ENCODE measurements at regions of chr7 and their contacts with region 1.

Region 1: GRCh38 chr7:83410989-83411591 is 237.8 kb downstream of the SEMA3E start:
- DNase-seq: peak in 1 of 6 donors; percentile 32
- ATAC-seq: peak in 3 of 4 donors; percentile 63 to 68 (median 65)
- H3K4me3 ChIP-seq: no peak overlapping the region
- H3K27ac ChIP-seq: no peak overlapping the region
- H3K4me1 ChIP-seq: no peaks in the 10 kb centered on the region
- H3K27me3 ChIP-seq: no peaks in the 10 kb centered on the region
- CTCF ChIP-seq: peak; percentile 34 to 55 (median 46)

Region 2: DNA sequence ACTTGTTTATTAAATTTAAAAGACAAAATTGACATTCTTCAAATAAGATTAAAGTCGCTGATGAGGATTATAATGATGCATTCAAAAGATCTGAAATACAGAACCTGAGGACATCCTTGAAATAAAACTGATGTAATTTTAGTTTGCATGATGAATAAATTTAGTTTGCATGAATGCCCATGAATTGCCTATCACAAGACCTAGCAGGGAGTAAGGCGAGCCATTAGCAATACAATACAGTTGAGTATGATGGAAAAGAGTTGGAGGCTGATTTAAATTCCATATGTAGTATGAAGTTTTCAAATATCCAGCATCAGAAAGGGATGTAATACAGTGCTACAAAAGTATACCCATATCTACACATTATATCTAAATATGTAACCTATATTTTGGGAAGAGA is 1288.8 kb before region 1 on chr7:
- intact Hi-C with region 1: no loop called
- DNase-seq: no peak
- ATAC-seq: no peak
- H3K4me3 ChIP-seq: no peak overlapping the region
- H3K27ac ChIP-seq: no peak overlapping the region
- H3K4me1 ChIP-seq: no peaks in the 10 kb centered on the region
- H3K27me3 ChIP-seq: no peaks in the 10 kb centered on the region
- CTCF ChIP-seq: no peak

Region 3: GRCh38 chr7:83306502-83306901 is 104.6 kb before region 1 on chr7:
- intact Hi-C with region 1: no loop called
- DNase-seq: no peak
- ATAC-seq: no peak
- H3K4me3 ChIP-seq: no peak overlapping the region
- H3K27ac ChIP-seq: no peak overlapping the region
- H3K4me1 ChIP-seq: no peaks in the 10 kb centered on the region
- H3K27me3 ChIP-seq: no peaks in the 10 kb centered on the region
- CTCF ChIP-seq: no peak

Region 4: GRCh38 chr7:83362871-83363550 is 48.1 kb before region 1 on chr7:
- intact Hi-C with region 1: no loop called
- DNase-seq: no peak
- ATAC-seq: no peak
- H3K4me3 ChIP-seq: no peak overlapping the region
- H3K27ac ChIP-seq: no peak overlapping the region
- H3K4me1 ChIP-seq: no peaks in the 10 kb centered on the region
- H3K27me3 ChIP-seq: no peaks in the 10 kb centered on the region
- CTCF ChIP-seq: no peak

Region 5: GRCh38 chr7:83655951-83656556 is 245.0 kb after region 1 on chr7:
- intact Hi-C with region 1: loop called in 1 of 3 experiments (anchors 5 kb)
- DNase-seq: peak in 1 of 6 donors; percentile 57
- ATAC-seq: peak in 3 of 4 donors; percentile 86 to 90 (median 87)
- H3K4me3 ChIP-seq: no peak overlapping the region
- H3K27ac ChIP-seq: no peak overlapping the region
- H3K4me1 ChIP-seq: no peaks in the 10 kb centered on the region
- H3K27me3 ChIP-seq: no peaks in the 10 kb centered on the region
- CTCF ChIP-seq: peak in 3 of 4 donors; percentile 11 to 79 (median 70)

Region 6: GRCh38 chr7:83701736-83702135 is 290.6 kb after region 1 on chr7:
- intact Hi-C with region 1: no loop called
- DNase-seq: no peak
- ATAC-seq: no peak
- H3K4me3 ChIP-seq: no peak overlapping the region
- H3K27ac ChIP-seq: no peak overlapping the region
- H3K4me1 ChIP-seq: no peaks in the 10 kb centered on the region
- H3K27me3 ChIP-seq: no peaks in the 10 kb centered on the region
- CTCF ChIP-seq: no peak